Natural killer cell (primary cell): ENCODE measurements at regions of chr16 and their contacts with region 1.

Region 1: GRCh38 chr16:82945420-82946101 is 318.8 kb downstream of the CDH13 start:
- DNase-seq: peak; percentile 25 to 63
- ATAC-seq: peak; percentile 81 to 91 (median 86)
- H3K4me3 ChIP-seq: no peak overlapping the region
- H3K4me3 Mint-ChIP-seq: peak overlapping the region; percentile 85
- H3K27ac ChIP-seq: peak overlapping the region; percentile 75
- H3K27ac Mint-ChIP-seq: peak overlapping the region; percentile 75 to 93
- H3K4me1 ChIP-seq: peaks cover 31% of the 10 kb centered on the region
- H3K4me1 Mint-ChIP-seq: peaks cover 73 to 79% of the 10 kb centered on the region in 2 donors
- H3K27me3 ChIP-seq: no peaks in the 10 kb centered on the region
- H3K27me3 Mint-ChIP-seq: no peaks in the 10 kb centered on the region
- CTCF ChIP-seq: no peak

Region 2: GRCh38 chr16:82653550-82654511 is 291.7 kb before region 1 on chr16:
- intact Hi-C with region 1: loop called (anchors 5 kb)
- DNase-seq: peak in 1 of 2 donors; percentile 85
- ATAC-seq: peak; percentile 65 to 80 (median 72)
- H3K4me3 ChIP-seq: no peak overlapping the region
- H3K4me3 Mint-ChIP-seq: peak overlapping the region; percentile 29
- H3K27ac ChIP-seq: peak overlapping the region; percentile 59
- H3K27ac Mint-ChIP-seq: peak overlapping the region; percentile 71 to 92
- H3K4me1 ChIP-seq: peaks cover 51% of the 10 kb centered on the region
- H3K4me1 Mint-ChIP-seq: peaks cover 33 to 43% of the 10 kb centered on the region in 2 donors
- H3K27me3 ChIP-seq: no peaks in the 10 kb centered on the region
- H3K27me3 Mint-ChIP-seq: peaks cover 0 to 5% of the 10 kb centered on the region in 2 donors
- CTCF ChIP-seq: no peak

Region 3: GRCh38 chr16:82900559-82900958 is 45.0 kb before region 1 on chr16:
- intact Hi-C with region 1: no loop called
- DNase-seq: no peak
- ATAC-seq: no peak
- H3K4me3 ChIP-seq: no peak overlapping the region
- H3K4me3 Mint-ChIP-seq: no peak overlapping the region
- H3K27ac ChIP-seq: no peak overlapping the region
- H3K27ac Mint-ChIP-seq: no peak overlapping the region
- H3K4me1 ChIP-seq: no peaks in the 10 kb centered on the region
- H3K4me1 Mint-ChIP-seq: peaks cover 0 to 7% of the 10 kb centered on the region in 2 donors
- H3K27me3 ChIP-seq: no peaks in the 10 kb centered on the region
- H3K27me3 Mint-ChIP-seq: peaks cover 7 to 8% of the 10 kb centered on the region in 2 donors
- CTCF ChIP-seq: no peak

Region 4: DNA sequence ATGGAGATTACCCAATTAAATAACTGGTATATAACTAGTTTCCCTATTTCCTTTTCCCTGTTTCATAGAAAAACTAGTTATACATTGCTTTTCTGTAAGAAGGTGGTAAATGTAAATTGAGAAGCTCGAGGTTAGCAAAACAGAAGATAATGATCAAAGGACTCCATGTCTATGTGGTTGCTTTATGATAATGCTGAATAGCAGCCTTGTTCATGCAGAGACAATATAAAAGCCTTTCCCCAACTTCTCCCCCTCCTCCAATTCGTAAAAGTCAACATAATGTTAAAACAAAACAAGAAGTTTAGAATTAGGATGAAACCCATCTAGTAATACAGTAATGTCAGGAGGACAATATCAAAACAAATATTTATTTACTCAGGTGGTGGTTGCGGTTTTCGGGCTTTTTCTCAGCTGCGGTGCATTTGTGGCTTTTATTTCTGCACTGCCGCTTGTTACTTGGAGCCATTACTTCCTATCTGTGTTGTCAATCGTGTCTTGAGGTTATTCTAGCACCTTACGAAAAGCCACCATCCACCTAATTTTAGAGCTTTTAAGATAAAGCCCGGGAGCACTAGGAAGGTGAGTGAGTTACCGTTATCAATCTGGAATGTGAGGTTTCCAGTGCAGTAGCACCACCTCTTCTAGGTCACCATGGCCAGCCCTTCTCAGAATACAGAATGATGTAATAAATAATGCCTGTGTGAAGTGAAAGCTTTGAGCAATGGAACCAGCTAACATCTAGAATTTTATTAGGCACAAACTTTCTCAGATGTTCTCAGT is 21.3 kb before region 1 on chr16:
- intact Hi-C with region 1: loop called (anchors 2 kb)
- DNase-seq: peak; percentile 28 to 66
- ATAC-seq: peak; percentile 64 to 79 (median 72)
- H3K4me3 ChIP-seq: no peak overlapping the region
- H3K4me3 Mint-ChIP-seq: peak overlapping the region; percentile 75
- H3K27ac ChIP-seq: no peak overlapping the region
- H3K27ac Mint-ChIP-seq: peak overlapping the region; percentile 45 to 76
- H3K4me1 ChIP-seq: peaks cover 27% of the 10 kb centered on the region
- H3K4me1 Mint-ChIP-seq: peaks cover 40 to 46% of the 10 kb centered on the region in 2 donors
- H3K27me3 ChIP-seq: no peaks in the 10 kb centered on the region
- H3K27me3 Mint-ChIP-seq: peaks cover 0 to 3% of the 10 kb centered on the region in 2 donors
- CTCF ChIP-seq: no peak

Region 5: GRCh38 chr16:83137326-83137770 is 191.8 kb after region 1 on chr16:
- intact Hi-C with region 1: loop called (anchors 5 kb)
- DNase-seq: peak; percentile 43 to 64
- ATAC-seq: peak; percentile 82 to 90 (median 85)
- H3K4me3 ChIP-seq: peak overlapping the region; percentile 6
- H3K4me3 Mint-ChIP-seq: peak overlapping the region; percentile 89
- H3K27ac ChIP-seq: peak overlapping the region; percentile 48
- H3K27ac Mint-ChIP-seq: peak overlapping the region; percentile 86 to 89
- H3K4me1 ChIP-seq: peaks cover 19% of the 10 kb centered on the region
- H3K4me1 Mint-ChIP-seq: peaks cover 19 to 20% of the 10 kb centered on the region in 2 donors
- H3K27me3 ChIP-seq: no peaks in the 10 kb centered on the region
- H3K27me3 Mint-ChIP-seq: peaks cover 0 to 15% of the 10 kb centered on the region in 2 donors
- CTCF ChIP-seq: no peak